ENCODE measurements at regions of chrX and their contacts with region 1.

Region 1: GRCh38 chrX:81174286-81174685 is 27.4 kb downstream of the HMGN5 start:
- DNase-seq: no peak
- H3K4me3 ChIP-seq: no peak overlapping the region
- H3K27ac ChIP-seq: no peak overlapping the region
- H3K4me1 ChIP-seq: no peaks in the 10 kb centered on the region
- H3K27me3 ChIP-seq: no peaks in the 10 kb centered on the region
- CTCF ChIP-seq: peak in 5 of 6 experiments; percentile 12 to 51 (median 44)
- POLR2A ChIP-seq: no peak

Region 2: GRCh38 chrX:81377329-81377728 is 203.0 kb after region 1 on chrX:
- intact Hi-C with region 1: loop called in 1 of 2 experiments (anchors 10 kb)
- DNase-seq: no peak
- H3K4me3 ChIP-seq: no peak overlapping the region
- H3K27ac ChIP-seq: no peak overlapping the region
- H3K4me1 ChIP-seq: no peaks in the 10 kb centered on the region
- H3K27me3 ChIP-seq: peaks cover 9% of the 10 kb centered on the region
- CTCF ChIP-seq: peak; percentile 37 to 66 (median 44)
- POLR2A ChIP-seq: no peak

Measured in adrenal gland (tissue), 19 donors.